ENCODE measurements at regions of chr11 and their contacts with region 1.

Region 1: DNA sequence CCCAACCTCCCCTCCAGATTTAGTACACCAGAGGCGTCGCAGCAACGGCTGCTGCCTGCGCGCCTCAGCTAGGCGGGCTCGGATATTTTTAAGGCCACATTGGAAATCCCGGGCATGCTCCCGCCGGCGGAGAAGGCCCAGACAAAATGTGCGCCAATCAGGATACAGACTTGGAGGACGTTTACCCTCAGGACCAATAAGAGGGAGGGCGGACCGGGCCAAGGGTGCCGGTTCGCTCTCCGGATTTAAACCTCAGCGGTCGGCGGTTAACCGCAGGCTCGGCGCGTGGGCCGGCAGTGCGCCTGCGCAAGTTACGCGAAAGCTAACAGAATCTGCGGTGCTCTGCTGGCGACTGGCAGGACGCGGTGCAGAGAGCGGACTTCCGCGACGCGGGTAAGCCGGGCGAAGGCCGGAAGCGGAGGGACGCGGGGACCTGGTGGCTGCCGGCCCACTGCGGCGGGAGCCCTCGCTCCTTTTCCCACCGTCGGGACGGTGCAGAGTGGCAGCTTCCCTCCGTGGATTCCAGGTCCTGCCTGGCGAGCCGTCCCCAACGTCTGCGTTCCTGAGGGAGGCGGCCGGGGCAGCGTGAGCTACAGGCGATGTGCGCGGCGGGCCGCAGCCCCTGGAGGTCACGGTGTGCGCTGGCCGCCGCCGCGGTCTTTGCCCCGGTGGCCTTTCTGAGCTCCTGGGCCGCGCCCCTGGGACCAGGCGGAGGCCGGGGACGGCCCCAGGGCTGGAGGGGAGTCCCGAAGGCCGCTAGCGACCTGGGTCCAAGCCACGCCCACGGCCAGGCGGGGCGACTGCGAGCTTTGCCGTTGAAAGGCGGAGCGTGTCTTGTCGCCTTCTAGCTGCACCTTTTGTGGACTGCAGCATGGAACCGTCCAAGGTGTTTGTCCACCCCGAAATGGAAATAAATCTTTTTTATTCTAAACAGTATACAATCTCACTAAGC is at the start of gene HYLS1:
- DNase-seq: peak; percentile 90 to 94
- H3K4me3 ChIP-seq: peak within 1 kb of the TSS; percentile 67
- H3K27ac ChIP-seq: peak within 1 kb of the TSS; percentile 35; the same call in 1 of the 2 replicates
- H3K4me1 ChIP-seq: peaks cover 22% of the 10 kb centered on the region
- H3K27me3 ChIP-seq: no peaks in the 10 kb centered on the region
- CTCF ChIP-seq: no peak
- total RNA-seq, gene HYLS1: 12.2 and 16.7 TPM in 2 replicates

Region 2: DNA sequence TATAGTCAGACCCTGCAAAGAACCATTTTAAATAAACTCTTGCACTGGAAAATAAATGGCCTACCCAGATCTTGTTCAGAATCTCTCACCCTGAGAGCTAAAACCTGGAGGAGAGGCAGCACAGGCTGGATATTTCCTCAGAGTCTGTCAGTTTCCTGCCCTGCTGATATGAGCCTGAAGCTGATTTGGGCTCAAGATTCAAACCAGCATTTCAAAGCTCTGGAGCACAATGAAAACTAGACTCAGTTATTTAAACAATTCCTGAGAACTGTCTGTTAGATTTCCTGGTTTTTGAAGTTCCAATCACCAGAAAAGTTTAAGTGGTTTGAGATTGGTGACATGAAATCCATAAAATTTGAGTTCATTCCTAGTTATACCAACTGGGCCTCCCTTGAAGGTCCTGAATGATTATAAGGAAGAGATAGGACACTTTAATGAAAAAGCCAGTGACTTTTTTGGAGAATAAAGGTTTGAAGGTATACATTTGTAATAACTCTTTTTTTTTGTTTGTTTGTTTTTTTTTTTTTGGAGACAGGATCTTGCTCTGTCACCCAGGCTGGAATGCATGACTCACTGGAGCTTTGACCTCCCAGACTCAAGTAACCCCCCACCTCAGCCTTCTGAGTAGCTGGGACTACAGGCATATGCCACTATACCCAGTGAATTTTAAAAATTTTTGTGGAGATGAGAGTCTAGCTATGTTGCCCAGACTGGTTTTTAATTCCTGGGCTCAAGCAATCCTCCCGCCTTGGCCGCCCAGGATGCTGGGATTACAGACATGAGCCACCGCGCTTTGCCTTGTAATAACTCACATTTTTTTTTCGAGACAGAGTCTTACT is 1117.6 kb before region 1 on chr11:
- CTCF ChIA-PET with region 1: no interaction called
- POLR2A ChIA-PET with region 1: interaction called, 17 read pairs
- intact Hi-C with region 1: no loop called
- DNase-seq: peak; percentile 72 to 93
- H3K4me3 ChIP-seq: peak overlapping the region; percentile 1; the same call in 1 of the 2 replicates
- H3K27ac ChIP-seq: peak overlapping the region; percentile 72
- H3K4me1 ChIP-seq: peaks cover 42% of the 10 kb centered on the region
- H3K27me3 ChIP-seq: no peaks in the 10 kb centered on the region
- CTCF ChIP-seq: no peak

Region 3: DNA sequence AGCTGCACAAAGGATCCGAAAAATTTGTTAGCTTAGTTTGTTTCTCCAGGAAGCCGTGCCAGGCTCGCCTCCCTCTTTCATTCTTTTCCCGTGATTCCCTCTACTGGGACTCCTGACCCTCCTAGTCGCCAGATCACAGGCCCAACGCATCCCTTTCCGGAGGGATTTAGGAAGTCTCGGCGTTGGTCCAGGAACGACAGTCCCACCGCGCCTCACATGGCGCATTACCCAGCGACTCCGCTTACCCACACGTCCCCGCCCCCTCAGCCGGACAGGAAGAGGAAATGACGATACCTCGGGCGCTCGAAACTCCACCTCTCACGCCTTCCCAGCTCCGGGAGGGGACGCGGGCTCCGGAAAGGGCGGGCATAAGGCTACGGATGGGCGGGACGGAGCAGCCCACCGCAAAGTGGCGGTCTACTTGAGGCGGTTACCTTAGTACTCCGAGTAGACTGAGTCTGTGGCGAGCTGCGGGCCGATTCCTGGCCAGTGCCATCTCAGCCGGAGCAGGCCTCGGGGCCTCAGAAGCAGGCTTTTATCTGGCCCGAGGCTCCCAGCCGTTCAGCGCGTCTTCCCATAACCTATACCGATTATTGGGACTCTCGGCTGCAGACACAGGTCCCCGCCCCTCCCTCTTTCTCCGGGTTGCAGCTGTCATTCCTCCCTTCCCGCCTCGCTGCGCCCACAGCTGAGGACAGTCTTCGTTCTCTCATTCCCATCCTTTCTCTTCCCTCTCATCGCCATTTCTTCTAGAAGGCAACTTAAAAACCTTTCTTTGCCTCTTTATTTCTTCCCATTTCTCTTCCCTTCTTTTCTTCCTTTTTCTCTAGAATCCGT is 933.7 kb before region 1 on chr11 and contains the start of gene CCDC15:
- CTCF ChIA-PET with region 1: no interaction called
- POLR2A ChIA-PET with region 1: interaction called, 13 read pairs
- intact Hi-C with region 1: no loop called
- DNase-seq: peak; percentile 92 to 93
- H3K4me3 ChIP-seq: peak within 1 kb of the TSS; percentile 81
- H3K27ac ChIP-seq: peak within 1 kb of the TSS; percentile 64
- H3K4me1 ChIP-seq: peaks cover 16% of the 10 kb centered on the region
- H3K27me3 ChIP-seq: no peaks in the 10 kb centered on the region
- CTCF ChIP-seq: no peak
- total RNA-seq, gene CCDC15: 2.7 and 2.8 TPM in 2 replicates

Region 4: GRCh38 chr11:125123947-125124617 is 763.6 kb before region 1 on chr11:
- CTCF ChIA-PET with region 1: no interaction called
- POLR2A ChIA-PET with region 1: interaction called, 21 read pairs
- intact Hi-C with region 1: no loop called
- DNase-seq: peak; percentile 45 to 72
- H3K4me3 ChIP-seq: peak overlapping the region; percentile 57
- H3K27ac ChIP-seq: peak overlapping the region; percentile 57
- H3K4me1 ChIP-seq: peaks cover 14% of the 10 kb centered on the region
- H3K27me3 ChIP-seq: no peaks in the 10 kb centered on the region
- CTCF ChIP-seq: peak; percentile 80

Region 5: GRCh38 chr11:125592305-125593112 is 295.1 kb before region 1 on chr11 and contains the start of gene STT3A:
- CTCF ChIA-PET with region 1: no interaction called
- POLR2A ChIA-PET with region 1: interaction called, 4 read pairs
- intact Hi-C with region 1: loop called (anchors 2 kb)
- DNase-seq: peak; percentile 96 to 99
- H3K4me3 ChIP-seq: peak within 1 kb of the TSS; percentile 80
- H3K27ac ChIP-seq: peak within 1 kb of the TSS; percentile 89
- H3K4me1 ChIP-seq: peaks cover 30% of the 10 kb centered on the region
- H3K27me3 ChIP-seq: no peaks in the 10 kb centered on the region
- CTCF ChIP-seq: no peak
- total RNA-seq, gene STT3A: 86.1 and 113 TPM in 2 replicates

Region 6: GRCh38 chr11:125625630-125626287 is 261.9 kb before region 1 on chr11:
- CTCF ChIA-PET with region 1: no interaction called
- POLR2A ChIA-PET with region 1: interaction called, 7 read pairs
- intact Hi-C with region 1: loop called (anchors 5 kb)
- DNase-seq: peak; percentile 82 to 88
- H3K4me3 ChIP-seq: peak overlapping the region; percentile 71
- H3K27ac ChIP-seq: peak overlapping the region; percentile 77
- H3K4me1 ChIP-seq: peaks cover 15% of the 10 kb centered on the region
- H3K27me3 ChIP-seq: no peaks in the 10 kb centered on the region
- CTCF ChIP-seq: no peak

Region 7: GRCh38 chr11:125649465-125650166 is 238.0 kb before region 1 on chr11:
- CTCF ChIA-PET with region 1: no interaction called
- POLR2A ChIA-PET with region 1: no interaction called
- intact Hi-C with region 1: no loop called
- DNase-seq: no peak
- H3K4me3 ChIP-seq: no peak overlapping the region
- H3K27ac ChIP-seq: no peak overlapping the region
- H3K4me1 ChIP-seq: no peaks in the 10 kb centered on the region
- H3K27me3 ChIP-seq: no peaks in the 10 kb centered on the region
- CTCF ChIP-seq: no peak

Region 8: GRCh38 chr11:126012852-126013251 is 125.2 kb after region 1 on chr11:
- CTCF ChIA-PET with region 1: no interaction called
- POLR2A ChIA-PET with region 1: interaction called, 15 read pairs
- intact Hi-C with region 1: no loop called
- DNase-seq: no peak
- H3K4me3 ChIP-seq: no peak overlapping the region
- H3K27ac ChIP-seq: no peak overlapping the region
- H3K4me1 ChIP-seq: no peaks in the 10 kb centered on the region
- H3K27me3 ChIP-seq: no peaks in the 10 kb centered on the region
- CTCF ChIP-seq: no peak

Measured in PC-9 (cell line).